IMR-90 (cell line): ENCODE measurements at regions of chr9 and their contacts with region 1.

Region 1: GRCh38 chr9:100605405-100605804 is 27.5 kb downstream of the CAVIN4 start:
- DNase-seq: no peak
- ATAC-seq: no peak
- H3K4me3 ChIP-seq: no peak overlapping the region
- H3K27ac ChIP-seq: no peak overlapping the region
- H3K4me1 ChIP-seq: no peaks in the 10 kb centered on the region
- H3K27me3 ChIP-seq: no peaks in the 10 kb centered on the region; the same call in 1 of the 2 replicates
- CTCF ChIP-seq: no peak
- POLR2A ChIP-seq: no peak
- RAD21 ChIP-seq: no peak

Region 2: GRCh38 chr9:101311758-101312420 is 706.5 kb after region 1 on chr9:
- CTCF ChIA-PET with region 1: interaction called, 38 read pairs
- POLR2A ChIA-PET with region 1: no interaction called
- dilution Hi-C with region 1: no loop called
- in situ Hi-C with region 1: loop called (anchors 5 kb)
- intact Hi-C with region 1: loop called (anchors 1 kb)
- DNase-seq: peak; percentile 84
- ATAC-seq: peak; percentile 72
- H3K4me3 ChIP-seq: no peak overlapping the region
- H3K27ac ChIP-seq: no peak overlapping the region
- H3K4me1 ChIP-seq: no peaks in the 10 kb centered on the region
- H3K27me3 ChIP-seq: peaks cover 1% of the 10 kb centered on the region; the same call in 1 of the 2 replicates
- CTCF ChIP-seq: peak; percentile 82
- POLR2A ChIP-seq: no peak
- RAD21 ChIP-seq: peak; percentile 81